Gastrocnemius medialis (tissue), 4 donors: ENCODE measurements at regions of chr12 and their contacts with region 1.

Region 1: GRCh38 chr12:31629756-31630732 is 29.4 kb upstream of the ETFBKMT start:
- DNase-seq: peak; percentile 32 to 48
- ATAC-seq: peak; percentile 89 to 98
- H3K4me3 ChIP-seq: peak overlapping the region in 2 of 4 donors; percentile 28 to 46
- H3K27ac ChIP-seq: peak overlapping the region; percentile 53 to 66 (median 57)
- H3K4me1 ChIP-seq: peaks cover 10 to 12% of the 10 kb centered on the region in 2 donors
- H3K27me3 ChIP-seq: no peaks in the 10 kb centered on the region
- CTCF ChIP-seq: no peak
- POLR2A ChIP-seq: no peak

Region 2: GRCh38 chr12:31306621-31307265 is 323.3 kb before region 1 on chr12:
- in situ Hi-C with region 1: no loop called
- intact Hi-C with region 1: no loop called
- DNase-seq: no peak
- ATAC-seq: no peak
- H3K4me3 ChIP-seq: no peak overlapping the region
- H3K27ac ChIP-seq: no peak overlapping the region
- H3K4me1 ChIP-seq: no peaks in the 10 kb centered on the region
- H3K27me3 ChIP-seq: no peaks in the 10 kb centered on the region
- CTCF ChIP-seq: no peak
- POLR2A ChIP-seq: no peak

Region 3: GRCh38 chr12:31406345-31406744 is 223.7 kb before region 1 on chr12:
- in situ Hi-C with region 1: loop called (anchors 5 kb)
- intact Hi-C with region 1: no loop called
- DNase-seq: no peak
- ATAC-seq: no peak
- H3K4me3 ChIP-seq: no peak overlapping the region
- H3K27ac ChIP-seq: no peak overlapping the region
- H3K4me1 ChIP-seq: no peaks in the 10 kb centered on the region
- H3K27me3 ChIP-seq: no peaks in the 10 kb centered on the region
- CTCF ChIP-seq: no peak
- POLR2A ChIP-seq: no peak

Region 4: GRCh38 chr12:31431721-31432240 is 198.3 kb before region 1 on chr12:
- in situ Hi-C with region 1: no loop called
- intact Hi-C with region 1: no loop called
- DNase-seq: no peak
- ATAC-seq: no peak
- H3K4me3 ChIP-seq: no peak overlapping the region
- H3K27ac ChIP-seq: no peak overlapping the region
- H3K4me1 ChIP-seq: no peaks in the 10 kb centered on the region
- H3K27me3 ChIP-seq: no peaks in the 10 kb centered on the region
- CTCF ChIP-seq: no peak
- POLR2A ChIP-seq: no peak